ENCODE measurements at regions of chr19 and their contacts with region 1.

Region 1: DNA sequence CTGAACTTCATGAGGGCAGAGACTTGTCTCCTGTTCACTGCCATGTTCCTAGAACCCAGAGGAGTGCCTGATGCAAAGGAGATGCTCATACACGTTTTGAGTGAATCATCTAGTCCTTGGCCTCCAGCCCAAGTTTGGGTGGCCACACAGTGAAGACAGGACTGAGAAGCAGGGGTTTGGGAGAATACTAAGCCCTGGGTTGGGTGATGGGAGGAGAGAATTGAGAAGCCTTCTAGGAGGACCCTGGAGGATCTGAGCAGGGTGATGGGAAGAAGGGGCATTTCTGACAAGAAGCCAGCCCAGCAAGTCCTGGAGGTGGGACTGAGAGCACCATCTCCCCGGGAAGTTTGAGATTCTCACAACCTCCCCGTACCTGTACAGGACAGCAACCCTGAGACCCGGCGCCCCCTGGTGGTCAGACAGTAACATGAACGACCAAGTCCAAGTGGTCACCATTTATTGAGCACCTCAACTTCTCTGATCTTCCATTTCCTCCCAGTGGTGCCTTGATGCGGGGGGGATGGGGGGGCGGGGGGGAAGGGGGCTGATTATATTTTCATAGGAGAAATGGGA is 11.0 kb downstream of the CTU1 start:
- DNase-seq: no peak
- ATAC-seq: peak; percentile 92
- H3K4me3 ChIP-seq: no peak overlapping the region
- H3K27ac ChIP-seq: no peak overlapping the region
- H3K4me1 ChIP-seq: no peaks in the 10 kb centered on the region; the same call in 1 of the 2 replicates
- H3K27me3 ChIP-seq: no peaks in the 10 kb centered on the region
- CTCF ChIP-seq: peak; percentile 62 to 74 (median 69)
- EP300 ChIP-seq: no peak
- POLR2A ChIP-seq: no peak
- RAD21 ChIP-seq: peak; percentile 37

Region 2: GRCh38 chr19:50933640-50934039 is 163.6 kb before region 1 on chr19:
- CTCF ChIA-PET with region 1: interaction called, 4 read pairs
- POLR2A ChIA-PET with region 1: no interaction called
- RAD21 ChIA-PET with region 1: interaction called, 3 read pairs
- SMC1A ChIA-PET with region 1: no interaction called
- in situ Hi-C with region 1: loop called (anchors 10 kb)
- intact Hi-C with region 1: loop called (anchors 5 kb)
- DNase-seq: no peak
- ATAC-seq: no peak
- H3K4me3 ChIP-seq: no peak overlapping the region
- H3K27ac ChIP-seq: no peak overlapping the region
- H3K4me1 ChIP-seq: no peaks in the 10 kb centered on the region
- H3K27me3 ChIP-seq: no peaks in the 10 kb centered on the region
- CTCF ChIP-seq: no peak
- EP300 ChIP-seq: no peak
- POLR2A ChIP-seq: no peak
- RAD21 ChIP-seq: no peak

Region 3: DNA sequence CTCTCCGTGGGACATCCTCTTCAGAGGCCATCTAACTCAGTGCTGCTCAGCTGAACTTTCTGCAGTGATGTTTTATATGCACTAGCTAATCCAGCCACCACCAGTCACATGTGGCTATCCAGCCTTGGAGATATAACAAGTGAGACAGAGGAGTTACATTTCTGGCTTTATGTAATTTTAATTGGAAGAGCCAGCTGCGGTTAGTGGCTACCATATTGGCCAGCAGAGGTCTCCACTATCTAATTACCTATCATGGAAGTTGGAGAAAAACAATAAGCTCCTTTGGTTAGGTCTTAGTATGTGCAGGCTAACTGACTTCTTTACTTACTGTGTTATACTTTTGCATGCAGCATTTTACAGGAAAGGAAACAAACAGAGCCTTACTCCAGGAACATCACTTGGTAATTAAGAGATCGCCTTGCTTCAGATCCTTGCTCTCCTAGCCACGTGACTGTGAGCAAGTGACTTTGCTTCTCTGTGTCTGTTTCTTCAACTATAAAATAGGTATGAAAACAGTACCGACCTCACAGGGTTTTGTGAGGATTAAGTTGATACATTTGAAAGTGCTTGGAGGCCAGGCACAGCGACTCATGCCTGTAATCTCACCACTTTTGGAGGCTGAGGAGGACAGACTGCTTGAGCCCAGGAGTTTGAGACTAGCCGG is 76.1 kb before region 1 on chr19:
- CTCF ChIA-PET with region 1: interaction called, 17 read pairs
- POLR2A ChIA-PET with region 1: no interaction called
- RAD21 ChIA-PET with region 1: interaction called, 4 read pairs
- SMC1A ChIA-PET with region 1: no interaction called
- in situ Hi-C with region 1: no loop called
- intact Hi-C with region 1: no loop called
- DNase-seq: no peak
- ATAC-seq: peak; percentile 49
- H3K4me3 ChIP-seq: no peak overlapping the region
- H3K27ac ChIP-seq: no peak overlapping the region
- H3K4me1 ChIP-seq: no peaks in the 10 kb centered on the region
- H3K27me3 ChIP-seq: no peaks in the 10 kb centered on the region; a peak in 3 of 4 replicates
- CTCF ChIP-seq: peak; percentile 47 to 52 (median 48)
- EP300 ChIP-seq: no peak
- POLR2A ChIP-seq: no peak
- RAD21 ChIP-seq: peak; percentile 31; the same call in 1 of the 2 replicates

Region 4: DNA sequence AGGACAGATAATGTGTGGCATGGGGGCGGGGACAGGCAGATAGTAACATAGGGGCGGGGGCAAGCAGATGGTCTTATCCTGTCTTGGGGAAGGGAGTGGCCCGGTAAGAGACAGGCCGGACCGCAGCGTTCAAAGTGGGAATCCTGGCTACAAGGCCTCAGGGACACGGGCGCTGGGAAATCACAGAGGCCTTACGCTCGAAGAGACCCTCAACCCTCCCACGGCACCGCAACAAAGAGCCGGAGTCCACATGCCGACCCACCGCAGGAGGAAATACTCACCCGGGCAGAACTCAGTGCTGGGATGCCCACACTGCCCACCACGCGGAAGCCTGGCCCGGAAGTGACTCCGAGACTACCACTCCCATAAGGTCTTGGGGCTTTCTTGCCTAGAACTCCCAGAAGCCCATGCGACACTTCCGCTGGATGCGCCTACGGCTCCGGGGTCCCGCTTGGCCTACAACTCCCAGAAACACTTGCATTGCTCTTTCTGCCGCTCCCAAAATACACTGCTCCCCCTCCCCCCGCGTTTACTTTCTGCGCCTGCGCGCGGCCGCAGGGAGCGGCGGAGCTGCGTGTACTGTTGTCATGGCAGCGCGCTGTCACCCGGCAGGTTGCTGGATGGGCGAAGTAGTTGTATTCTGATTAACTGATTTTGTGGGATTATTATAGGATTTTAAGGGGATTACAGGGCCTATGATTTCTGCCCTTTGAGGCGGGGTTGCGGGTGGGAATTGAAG is 11.0 kb after region 1 on chr19 and contains the start of gene CTU1:
- CTCF ChIA-PET with region 1: interaction called, 12 read pairs
- POLR2A ChIA-PET with region 1: no interaction called
- RAD21 ChIA-PET with region 1: no interaction called
- SMC1A ChIA-PET with region 1: no interaction called
- in situ Hi-C with region 1: no loop called
- intact Hi-C with region 1: no loop called
- DNase-seq: peak; percentile 97
- ATAC-seq: peak; percentile 99
- H3K4me3 ChIP-seq: peak within 1 kb of the TSS; percentile 93
- H3K27ac ChIP-seq: peak within 1 kb of the TSS; percentile 66
- H3K4me1 ChIP-seq: no peaks in the 10 kb centered on the region
- H3K27me3 ChIP-seq: no peaks in the 10 kb centered on the region
- CTCF ChIP-seq: no peak
- EP300 ChIP-seq: no peak
- POLR2A ChIP-seq: peak; percentile 78
- RAD21 ChIP-seq: no peak
- polyA plus RNA-seq, gene CTU1: 0.02 TPM in 1 of 2 experiments, not detected in the other

Measured in GM12878 (cell line).